ENCODE measurements at regions of chr1 and their contacts with region 1.

Region 1: DNA sequence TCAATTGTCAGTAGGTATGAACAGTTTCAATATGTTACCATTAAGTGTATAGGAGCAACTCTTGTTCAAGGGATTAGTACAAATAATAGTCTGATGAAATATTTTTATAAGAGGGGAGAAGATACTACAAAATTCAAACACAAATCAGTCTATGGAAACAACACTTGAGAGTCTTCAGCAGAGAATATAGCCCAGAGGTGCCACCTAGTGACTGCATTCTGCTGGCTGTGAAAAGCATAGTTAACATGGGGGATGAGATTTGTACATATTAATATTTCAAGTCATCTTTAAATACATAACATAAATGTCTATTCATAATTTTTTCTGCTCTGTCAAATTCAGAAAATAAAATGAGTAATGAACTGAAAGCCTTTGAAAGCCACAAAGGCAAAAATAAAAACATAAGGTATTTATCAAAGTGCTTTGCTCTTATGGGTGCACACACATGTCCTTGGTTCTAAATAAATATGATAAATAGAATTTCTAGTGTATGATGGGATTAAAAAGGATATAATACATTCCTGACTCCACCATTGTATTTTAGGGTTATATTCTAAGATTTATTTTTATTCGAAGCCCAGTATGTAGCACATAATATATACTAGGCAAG is 440.9 kb upstream of the ZRANB2 start:
- DNase-seq: peak; percentile 51
- H3K4me3 Mint-ChIP-seq: no peak overlapping the region
- H3K27ac Mint-ChIP-seq: no peak overlapping the region
- H3K4me1 Mint-ChIP-seq: no peaks in the 10 kb centered on the region
- H3K27me3 Mint-ChIP-seq: no peaks in the 10 kb centered on the region
- CTCF ChIP-seq: peak; percentile 45

Region 2: GRCh38 chr1:70667494-70668170 is 854.1 kb before region 1 on chr1:
- CTCF ChIA-PET with region 1: no interaction called
- intact Hi-C with region 1: no loop called
- DNase-seq: no peak
- H3K4me3 Mint-ChIP-seq: no peak overlapping the region
- H3K27ac Mint-ChIP-seq: no peak overlapping the region
- H3K4me1 Mint-ChIP-seq: no peaks in the 10 kb centered on the region
- H3K27me3 Mint-ChIP-seq: no peaks in the 10 kb centered on the region
- CTCF ChIP-seq: no peak

Region 3: DNA sequence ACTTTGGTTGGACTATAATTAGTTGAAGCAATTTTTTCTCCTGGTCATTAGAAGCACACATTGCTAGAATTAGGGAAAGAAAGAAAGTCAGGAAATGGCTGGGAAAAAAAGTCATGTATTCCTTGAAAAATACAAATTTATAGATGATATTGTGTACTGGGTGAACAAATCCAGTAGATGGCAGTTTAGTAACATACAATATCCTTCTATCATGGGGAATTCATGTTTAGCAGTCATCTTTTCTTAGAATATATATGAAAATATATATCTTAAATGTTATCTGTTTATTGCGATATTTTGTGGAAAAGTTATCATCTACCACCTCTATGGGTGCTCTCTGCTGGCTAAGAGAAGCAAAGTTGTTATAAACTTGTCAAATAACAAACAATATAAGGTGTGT is 427.8 kb before region 1 on chr1:
- CTCF ChIA-PET with region 1: no interaction called
- intact Hi-C with region 1: loop called (anchors 5 kb)
- DNase-seq: no peak
- H3K4me3 Mint-ChIP-seq: no peak overlapping the region
- H3K27ac Mint-ChIP-seq: no peak overlapping the region
- H3K4me1 Mint-ChIP-seq: peaks cover 2% of the 10 kb centered on the region
- H3K27me3 Mint-ChIP-seq: no peaks in the 10 kb centered on the region
- CTCF ChIP-seq: no peak

Region 4: DNA sequence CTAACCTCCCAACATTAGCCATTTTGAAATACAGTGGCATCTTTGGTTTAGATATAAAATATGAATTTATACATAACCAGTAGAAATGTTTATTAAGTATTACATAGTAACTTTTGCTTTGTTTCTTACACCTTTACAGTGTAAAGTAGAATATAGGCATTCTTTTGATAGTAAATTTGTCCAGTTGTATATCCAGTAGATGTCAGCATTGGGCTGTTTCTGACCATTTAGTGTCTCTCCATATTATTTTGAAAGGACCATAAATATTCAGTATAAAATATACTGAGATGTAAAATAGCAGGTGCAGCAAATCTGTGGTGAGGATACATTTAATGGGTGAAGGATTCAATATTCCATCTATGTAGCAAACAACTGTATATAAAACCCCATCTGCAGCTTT is 325.1 kb before region 1 on chr1:
- CTCF ChIA-PET with region 1: no interaction called
- intact Hi-C with region 1: loop called (anchors 5 kb)
- DNase-seq: no peak
- H3K4me3 Mint-ChIP-seq: no peak overlapping the region
- H3K27ac Mint-ChIP-seq: no peak overlapping the region
- H3K4me1 Mint-ChIP-seq: no peaks in the 10 kb centered on the region
- H3K27me3 Mint-ChIP-seq: no peaks in the 10 kb centered on the region
- CTCF ChIP-seq: no peak

Region 5: GRCh38 chr1:71312545-71312944 is 209.2 kb before region 1 on chr1:
- CTCF ChIA-PET with region 1: no interaction called
- intact Hi-C with region 1: no loop called
- DNase-seq: no peak
- H3K4me3 Mint-ChIP-seq: no peak overlapping the region
- H3K27ac Mint-ChIP-seq: no peak overlapping the region
- H3K4me1 Mint-ChIP-seq: no peaks in the 10 kb centered on the region
- H3K27me3 Mint-ChIP-seq: no peaks in the 10 kb centered on the region
- CTCF ChIP-seq: no peak